Cardiac septum (tissue), 1 donor: ENCODE measurements at regions of chr14 and their contacts with region 1.

Region 1: DNA sequence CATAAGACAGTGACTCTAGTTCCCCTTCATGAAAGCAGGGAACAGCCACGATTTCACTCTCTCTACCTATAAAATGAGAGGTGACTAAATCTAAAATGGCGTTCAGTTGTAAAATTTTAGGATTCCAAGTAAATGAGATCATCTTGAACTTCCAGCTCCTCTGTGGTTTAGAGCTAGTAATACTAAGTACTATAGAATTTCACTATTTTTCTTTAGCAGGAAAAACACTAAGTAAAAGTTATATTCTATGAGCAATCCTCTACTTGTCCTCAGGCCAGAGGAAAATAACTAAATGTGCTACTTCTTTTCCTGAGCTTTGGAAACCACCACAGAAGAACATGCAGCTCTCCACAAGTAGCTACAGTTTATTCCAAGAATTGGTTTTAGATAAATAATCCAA is 55.6 kb downstream of the NIN start:
- DNase-seq: no peak

Region 2: GRCh38 chr14:50599700-50600444 is 175.5 kb before region 1 on chr14:
- intact Hi-C with region 1: loop called (anchors 5 kb)
- DNase-seq: no peak

Region 3: GRCh38 chr14:50830932-50831725 is 55.8 kb after region 1 on chr14 and contains the start of gene NIN:
- intact Hi-C with region 1: loop called (anchors 5 kb)
- DNase-seq: peak; percentile 89
- total RNA-seq, gene NIN: 59.2 TPM